Tibial artery (tissue), 4 donors: ENCODE measurements at regions of chr1 and their contacts with region 1.

Region 1: DNA sequence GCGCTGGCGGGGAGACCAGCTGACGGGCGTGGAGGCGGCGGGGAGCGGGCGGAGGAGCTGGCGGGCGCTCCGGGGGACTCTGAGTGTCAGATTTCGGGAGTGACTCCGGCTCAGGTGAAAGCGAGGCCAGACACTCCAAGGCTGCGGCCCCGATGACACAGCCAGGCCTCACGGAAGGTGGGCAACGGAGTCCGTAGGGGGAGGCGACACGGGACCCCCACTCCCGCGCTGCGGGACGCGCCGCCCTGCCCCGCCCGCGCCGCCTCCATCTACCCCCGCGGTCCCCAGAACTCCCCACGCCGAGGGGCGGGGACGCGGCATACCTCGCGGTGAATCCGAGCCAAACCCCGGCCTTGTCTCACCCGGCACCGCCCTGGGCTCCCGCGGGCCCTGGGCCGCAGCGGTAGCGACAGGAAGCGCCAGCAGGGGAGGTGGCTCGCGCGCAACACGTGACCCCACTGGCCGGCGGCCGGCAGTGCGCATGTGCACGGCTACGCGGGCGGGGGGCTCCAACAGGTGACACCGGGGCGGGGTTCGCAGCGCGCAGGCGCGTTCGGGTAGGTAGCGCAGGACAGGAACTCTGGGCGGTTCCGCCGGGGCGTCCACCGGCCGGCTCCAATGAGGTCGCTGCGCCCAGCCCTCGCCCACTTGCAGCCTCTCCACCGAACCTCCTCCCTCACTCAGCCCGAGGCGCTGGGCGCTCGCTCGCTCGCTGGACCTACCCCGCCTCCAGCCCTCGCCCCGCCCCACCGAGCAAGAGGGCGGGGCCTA is at the start of gene CC2D1B:
- DNase-seq: peak; percentile 97 to 99
- H3K4me3 ChIP-seq: peak within 1 kb of the TSS; percentile 88 to 90
- H3K27ac ChIP-seq: peak within 1 kb of the TSS; percentile 91 to 96
- H3K4me1 ChIP-seq: peaks cover 0 to 27% (median 16%) of the 10 kb centered on the region in 4 donors
- H3K27me3 ChIP-seq: no peaks in the 10 kb centered on the region
- CTCF ChIP-seq: peak; percentile 36 to 41

Region 2: GRCh38 chr1:52056163-52056936 is 309.6 kb before region 1 on chr1 and contains the start of gene BTF3L4:
- intact Hi-C with region 1: loop called (anchors 5 kb)
- DNase-seq: peak; percentile 97
- H3K4me3 ChIP-seq: peak within 1 kb of the TSS; percentile 87 to 90
- H3K27ac ChIP-seq: peak within 1 kb of the TSS; percentile 89 to 94
- H3K4me1 ChIP-seq: peaks cover 0 to 46% (median 31%) of the 10 kb centered on the region in 4 donors
- H3K27me3 ChIP-seq: no peaks in the 10 kb centered on the region
- CTCF ChIP-seq: no peak

Region 3: DNA sequence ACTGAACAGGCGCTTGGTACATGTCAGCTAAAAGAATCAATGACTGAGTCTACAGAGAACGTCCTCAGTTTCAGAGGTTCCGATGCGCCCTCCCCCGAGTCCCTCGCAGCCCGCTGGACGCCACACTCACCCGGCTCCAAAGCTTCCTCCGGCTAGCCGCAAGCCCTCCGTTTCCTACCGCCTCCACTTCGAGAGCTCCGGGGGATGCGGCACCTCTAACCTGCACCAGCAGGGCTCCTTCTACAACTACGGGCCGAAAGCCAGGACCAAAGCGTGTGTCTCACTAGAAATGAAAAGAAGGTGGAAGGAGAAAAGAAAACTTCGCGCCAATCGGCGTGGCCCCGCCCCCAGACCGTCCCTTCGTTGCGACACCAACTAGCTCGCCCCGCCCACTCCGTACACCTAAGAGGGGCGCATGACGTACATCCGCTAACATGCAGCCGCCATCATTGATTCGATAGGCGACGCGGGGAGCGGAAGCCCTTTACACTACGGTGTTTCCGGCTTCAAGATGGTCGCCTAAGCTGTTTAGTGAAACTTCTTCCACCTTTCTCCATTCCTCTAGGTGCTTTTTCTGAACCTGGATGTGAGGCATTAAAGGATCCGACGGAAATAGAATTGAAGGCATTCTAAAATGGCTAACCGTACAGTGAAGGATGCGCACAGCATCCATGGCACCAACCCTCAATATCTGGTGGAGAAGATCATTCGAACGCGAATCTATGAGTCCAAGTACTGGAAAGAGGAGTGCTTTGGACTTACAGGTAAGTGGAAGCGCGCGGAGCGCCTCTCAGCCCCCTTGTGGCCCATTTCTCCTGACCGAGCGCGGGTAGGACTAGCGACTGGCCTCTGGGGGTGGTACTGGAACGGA is 38.4 kb after region 1 on chr1 and contains the starts of genes ORC1 and PRPF38A:
- intact Hi-C with region 1: loop called (anchors 5 kb)
- DNase-seq: peak; percentile 97 to 99
- H3K4me3 ChIP-seq: peak within 1 kb of the TSS; percentile 69 to 84
- H3K27ac ChIP-seq: peak within 1 kb of the TSS; percentile 82 to 88
- H3K4me1 ChIP-seq: peaks cover 0 to 26% (median 17%) of the 10 kb centered on the region in 4 donors
- H3K27me3 ChIP-seq: no peaks in the 10 kb centered on the region
- CTCF ChIP-seq: peak; percentile 41 to 51

Region 4: DNA sequence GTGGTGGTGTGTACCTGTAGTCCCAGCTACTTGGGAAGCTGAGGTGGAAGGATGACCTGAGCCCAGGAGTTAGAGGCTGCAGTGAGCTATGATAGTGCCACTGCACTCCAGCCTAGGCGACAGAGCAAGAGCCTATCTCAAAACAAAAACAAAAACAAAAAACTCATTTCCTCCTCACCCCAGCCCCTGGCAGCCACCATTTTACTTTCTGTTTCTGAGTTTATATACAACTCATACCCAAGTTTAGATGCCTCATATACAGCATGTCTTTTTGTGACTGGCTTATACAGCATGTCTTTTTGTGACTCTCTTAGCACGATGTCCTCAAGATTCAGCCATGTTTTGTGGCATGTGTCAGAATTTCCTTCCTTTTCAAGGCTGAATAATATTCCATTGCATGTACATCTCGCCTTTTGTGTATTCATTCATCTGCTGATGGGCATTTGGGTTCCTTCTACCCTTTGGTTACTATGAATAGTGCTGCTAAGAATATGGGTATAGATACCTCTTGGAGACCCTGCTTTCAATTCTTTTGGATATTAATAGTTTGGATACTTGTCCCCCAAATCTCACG is 317.5 kb after region 1 on chr1:
- intact Hi-C with region 1: loop called (anchors 10 kb)
- DNase-seq: no peak
- H3K4me3 ChIP-seq: no peak overlapping the region
- H3K27ac ChIP-seq: no peak overlapping the region
- H3K4me1 ChIP-seq: no peaks in the 10 kb centered on the region
- H3K27me3 ChIP-seq: no peaks in the 10 kb centered on the region
- CTCF ChIP-seq: no peak

Region 5: DNA sequence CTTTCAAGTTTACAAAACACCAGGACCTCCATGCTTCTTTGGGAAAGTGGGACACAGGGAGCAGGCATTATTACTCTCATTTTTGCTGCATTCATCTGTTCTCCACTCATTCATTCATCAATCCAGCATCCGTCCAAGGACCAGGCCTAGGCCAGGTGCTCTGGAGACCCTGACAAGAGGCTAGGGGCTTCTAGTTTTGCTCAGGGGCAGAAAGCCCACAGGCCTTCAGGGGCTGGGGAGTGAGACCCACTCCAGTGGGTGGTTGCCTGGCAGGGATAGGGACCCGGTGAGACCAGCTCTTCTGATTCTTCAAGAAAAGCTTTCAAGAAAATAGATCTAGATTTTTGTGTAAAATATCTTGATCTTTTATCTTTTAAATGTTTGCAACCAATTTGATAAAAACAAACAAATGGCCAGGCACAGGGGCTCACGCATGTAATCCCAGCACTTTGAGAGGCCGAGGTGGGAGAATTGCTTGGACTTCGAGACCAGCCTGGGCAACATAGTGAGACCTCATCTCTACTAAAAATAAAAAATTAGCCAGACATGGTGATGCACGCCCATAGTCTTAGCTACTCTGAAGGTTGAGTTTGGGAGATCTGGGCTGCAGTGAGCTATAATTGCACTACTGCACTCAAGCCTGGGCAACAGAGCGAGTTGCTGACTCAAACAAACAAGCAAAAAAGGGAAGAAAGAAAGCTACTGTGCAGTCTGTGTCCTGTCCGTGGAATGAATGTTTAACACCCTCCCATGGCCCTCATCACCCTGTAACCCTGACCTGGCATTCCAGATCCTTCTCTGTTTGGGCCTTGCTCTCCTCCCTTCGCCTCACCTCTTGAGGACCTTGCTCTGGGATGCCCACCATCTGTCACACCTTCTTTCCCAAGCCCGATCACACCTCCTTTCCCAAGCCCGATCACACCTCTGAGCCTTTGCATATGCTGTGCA is 979.2 kb after region 1 on chr1:
- intact Hi-C with region 1: no loop called
- DNase-seq: peak in 1 of 2 donors; percentile 27
- H3K4me3 ChIP-seq: no peak overlapping the region
- H3K27ac ChIP-seq: no peak overlapping the region
- H3K4me1 ChIP-seq: no peaks in the 10 kb centered on the region
- H3K27me3 ChIP-seq: peaks cover 0 to 11% of the 10 kb centered on the region in 2 donors
- CTCF ChIP-seq: no peak